ENCODE measurements at regions of chr15 and their contacts with region 1.

Region 1: GRCh38 chr15:65384895-65385858 is 7.4 kb upstream of the IGDCC3 start:
- DNase-seq: peak; percentile 96
- ATAC-seq: peak; percentile 86
- H3K4me3 Mint-ChIP-seq: peak overlapping the region; percentile 60
- H3K27ac Mint-ChIP-seq: no peak overlapping the region
- H3K4me1 Mint-ChIP-seq: peaks cover 24% of the 10 kb centered on the region
- H3K27me3 Mint-ChIP-seq: peaks cover 3% of the 10 kb centered on the region; the same call in 1 of the 2 replicates
- CTCF ChIP-seq: peak; percentile 75

Region 2: DNA sequence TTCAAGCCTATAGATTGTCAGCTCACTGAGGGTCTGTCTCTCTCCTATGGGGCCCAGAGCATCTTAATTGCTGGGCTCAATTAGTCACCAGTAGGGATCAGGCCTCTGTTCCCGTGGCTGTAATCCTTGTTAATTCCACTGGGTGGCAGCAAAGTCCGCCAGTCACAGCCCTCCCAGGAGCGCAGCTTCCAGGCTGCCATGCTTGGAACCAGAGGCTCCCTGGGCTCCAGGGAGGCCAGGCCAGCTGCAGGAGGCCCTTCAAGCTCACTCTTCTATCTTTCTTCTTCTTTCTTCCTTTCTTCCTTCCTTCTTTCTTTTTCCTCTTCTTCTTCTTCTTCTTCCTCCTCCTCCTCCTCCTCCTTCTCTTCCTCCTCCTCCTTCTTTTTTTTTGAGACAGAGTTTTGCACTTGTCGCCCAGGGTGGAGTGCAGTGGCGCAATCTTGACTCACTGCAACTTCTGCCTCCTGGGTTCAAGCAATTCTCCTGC is 66.3 kb before region 1 on chr15:
- CTCF ChIA-PET with region 1: interaction called, 175 read pairs
- POLR2A ChIA-PET with region 1: interaction called, 4 read pairs
- DNase-seq: peak; percentile 89
- ATAC-seq: peak; percentile 96
- H3K4me3 Mint-ChIP-seq: no peak overlapping the region
- H3K27ac Mint-ChIP-seq: no peak overlapping the region; the same call in 1 of the 2 replicates
- H3K4me1 Mint-ChIP-seq: no peaks in the 10 kb centered on the region
- H3K27me3 Mint-ChIP-seq: no peaks in the 10 kb centered on the region; the same call in 1 of the 2 replicates
- CTCF ChIP-seq: peak; percentile 93

Region 3: DNA sequence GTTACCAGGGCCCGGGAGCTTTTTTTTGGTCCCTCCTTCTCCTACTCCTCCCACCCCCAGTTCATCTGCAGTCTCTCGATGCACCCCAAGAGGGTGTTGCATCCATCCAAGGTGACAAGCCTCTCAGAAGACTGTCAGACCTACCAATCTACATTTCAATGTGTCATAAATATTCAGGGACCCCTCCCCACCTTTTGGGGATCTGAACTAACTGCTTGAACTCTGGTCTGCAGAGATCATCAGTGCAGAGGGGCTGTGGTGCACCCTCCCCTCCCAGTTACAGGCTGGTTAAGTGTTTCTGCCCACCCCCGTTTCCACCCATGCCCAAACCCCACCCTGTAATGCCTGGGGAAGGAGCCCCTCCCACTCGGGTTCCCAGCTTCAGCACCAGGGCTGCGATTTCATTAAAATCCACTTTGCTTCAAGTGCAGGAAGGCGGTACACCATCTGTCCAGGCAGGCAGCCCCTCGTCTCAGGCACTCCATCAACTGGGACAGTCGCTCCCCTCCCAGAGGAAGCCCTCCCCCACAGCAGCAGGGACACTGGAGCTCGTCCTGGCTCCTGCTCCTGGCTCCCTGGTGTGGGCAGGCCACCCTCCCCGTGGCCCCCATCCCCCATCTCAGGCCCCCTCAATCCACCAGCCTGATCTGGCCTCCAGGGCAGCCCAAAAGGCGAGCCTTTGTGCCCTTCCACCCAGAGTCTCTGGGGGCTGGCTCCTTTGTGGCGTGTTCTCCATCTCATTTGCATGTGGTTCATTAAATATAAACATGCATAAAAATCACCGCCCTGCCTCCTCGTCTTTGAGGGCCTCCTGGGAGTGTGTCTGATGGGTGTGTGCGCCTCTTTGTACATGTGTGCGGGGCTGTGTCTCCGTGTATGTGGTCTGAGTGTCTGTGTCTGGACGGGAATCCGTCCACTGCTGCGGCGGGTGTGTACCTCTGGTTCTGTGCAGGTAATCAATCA is 48.4 kb before region 1 on chr15:
- CTCF ChIA-PET with region 1: interaction called, 64 read pairs
- POLR2A ChIA-PET with region 1: no interaction called
- DNase-seq: no peak
- ATAC-seq: peak; percentile 40
- H3K4me3 Mint-ChIP-seq: no peak overlapping the region
- H3K27ac Mint-ChIP-seq: peak overlapping the region; percentile 45; the same call in 1 of the 2 replicates
- H3K4me1 Mint-ChIP-seq: peaks cover 76% of the 10 kb centered on the region
- H3K27me3 Mint-ChIP-seq: no peaks in the 10 kb centered on the region
- CTCF ChIP-seq: no peak

Region 4: DNA sequence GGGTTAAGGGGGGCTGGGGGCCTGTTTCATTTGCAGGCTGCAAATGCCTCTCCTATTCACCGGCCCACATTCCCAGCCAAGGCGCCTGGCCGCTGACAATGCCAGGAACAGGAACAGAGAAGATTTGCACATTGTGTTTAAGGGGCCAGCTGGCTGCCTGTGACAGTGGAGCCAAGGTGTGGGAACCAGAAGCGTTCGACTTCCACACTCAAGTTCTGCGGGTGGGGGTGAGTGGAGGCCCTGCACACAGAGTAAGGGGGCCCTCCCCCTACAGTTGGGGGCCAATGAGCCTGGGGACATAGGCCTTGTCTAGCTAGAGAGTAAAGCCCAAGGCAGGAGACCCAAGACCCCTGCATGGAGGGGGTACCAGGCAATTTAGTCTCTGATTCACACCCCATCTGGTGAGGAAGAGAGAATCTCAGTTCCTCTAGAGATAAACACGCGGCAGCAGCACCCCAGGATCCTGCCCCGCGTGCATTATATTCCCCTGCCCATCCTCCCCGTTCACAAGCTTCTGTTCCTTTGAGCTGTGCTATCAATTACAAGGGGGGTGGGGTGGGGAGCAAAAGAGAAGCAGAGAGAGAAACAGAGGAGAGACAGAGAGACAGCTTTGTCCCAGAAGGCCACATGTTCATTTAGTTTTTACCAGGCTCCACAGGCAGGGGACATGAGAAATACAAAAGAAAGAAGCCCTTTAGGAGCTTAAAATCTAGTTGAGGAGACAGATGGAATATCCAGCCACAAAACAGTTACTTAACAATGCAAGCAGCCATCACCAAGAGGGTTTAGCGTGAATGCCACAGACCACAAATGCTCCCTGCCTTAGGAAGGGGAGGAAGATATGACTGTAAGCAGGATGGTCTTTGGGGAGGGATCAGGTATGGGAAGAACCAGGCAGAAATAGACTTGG is 16.6 kb before region 1 on chr15:
- CTCF ChIA-PET with region 1: interaction called, 39 read pairs
- POLR2A ChIA-PET with region 1: interaction called, 3 read pairs
- DNase-seq: peak; percentile 69
- ATAC-seq: peak; percentile 58
- H3K4me3 Mint-ChIP-seq: peak overlapping the region; percentile 14; the same call in 1 of the 2 replicates
- H3K27ac Mint-ChIP-seq: peak overlapping the region; percentile 92
- H3K4me1 Mint-ChIP-seq: peaks cover 73% of the 10 kb centered on the region
- H3K27me3 Mint-ChIP-seq: no peaks in the 10 kb centered on the region
- CTCF ChIP-seq: no peak

Region 5: DNA sequence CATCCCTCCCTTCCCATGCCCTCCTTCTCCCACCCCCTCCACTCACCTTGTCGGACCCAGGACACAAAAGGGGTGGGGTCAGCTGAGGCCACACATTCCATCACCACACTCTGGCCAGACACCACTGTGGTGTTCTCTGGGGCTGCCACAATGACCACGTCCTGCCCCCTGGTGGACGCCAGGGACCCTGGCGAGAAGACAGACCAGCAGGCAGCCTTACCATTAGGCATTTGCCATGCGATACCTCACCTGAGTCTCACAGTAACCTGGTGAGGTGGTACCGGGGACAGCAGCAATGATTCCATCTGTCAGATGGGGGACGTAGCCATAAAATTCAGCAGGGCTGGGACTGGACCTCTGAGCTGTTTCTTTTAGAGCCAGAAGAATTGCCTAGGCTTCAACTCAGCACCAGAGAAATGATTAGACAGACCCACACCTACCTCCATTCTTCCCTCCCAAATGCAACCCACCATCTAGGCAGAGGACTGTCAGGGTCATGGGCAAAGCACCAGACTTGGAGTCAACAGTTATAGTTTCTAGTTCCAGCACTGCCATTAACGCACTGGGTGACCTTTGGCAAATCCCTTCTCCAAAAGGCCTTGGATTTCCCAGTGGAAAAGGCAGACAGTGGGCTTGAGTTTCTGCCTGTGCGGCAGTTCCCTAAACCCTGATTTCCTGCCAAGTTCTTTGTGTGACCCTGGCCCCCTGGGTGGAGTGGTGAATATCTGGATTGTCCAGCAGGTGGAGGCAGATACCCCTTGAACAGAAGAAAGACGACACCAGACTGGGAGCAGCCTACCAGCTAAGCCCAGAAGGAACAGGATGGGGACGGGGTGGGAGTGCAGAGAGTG is 15.8 kb after region 1 on chr15:
- CTCF ChIA-PET with region 1: interaction called, 23 read pairs
- POLR2A ChIA-PET with region 1: no interaction called
- DNase-seq: peak; percentile 92
- ATAC-seq: peak; percentile 83
- H3K4me3 Mint-ChIP-seq: no peak overlapping the region
- H3K27ac Mint-ChIP-seq: peak overlapping the region; percentile 95
- H3K4me1 Mint-ChIP-seq: peaks cover 42% of the 10 kb centered on the region
- H3K27me3 Mint-ChIP-seq: peaks cover 24% of the 10 kb centered on the region
- CTCF ChIP-seq: peak; percentile 74

Region 6: GRCh38 chr15:65494071-65494470 is 108.9 kb after region 1 on chr15:
- CTCF ChIA-PET with region 1: no interaction called
- POLR2A ChIA-PET with region 1: no interaction called
- DNase-seq: no peak
- ATAC-seq: no peak
- H3K4me3 Mint-ChIP-seq: no peak overlapping the region
- H3K27ac Mint-ChIP-seq: no peak overlapping the region
- H3K4me1 Mint-ChIP-seq: no peaks in the 10 kb centered on the region
- H3K27me3 Mint-ChIP-seq: no peaks in the 10 kb centered on the region
- CTCF ChIP-seq: no peak

Region 7: DNA sequence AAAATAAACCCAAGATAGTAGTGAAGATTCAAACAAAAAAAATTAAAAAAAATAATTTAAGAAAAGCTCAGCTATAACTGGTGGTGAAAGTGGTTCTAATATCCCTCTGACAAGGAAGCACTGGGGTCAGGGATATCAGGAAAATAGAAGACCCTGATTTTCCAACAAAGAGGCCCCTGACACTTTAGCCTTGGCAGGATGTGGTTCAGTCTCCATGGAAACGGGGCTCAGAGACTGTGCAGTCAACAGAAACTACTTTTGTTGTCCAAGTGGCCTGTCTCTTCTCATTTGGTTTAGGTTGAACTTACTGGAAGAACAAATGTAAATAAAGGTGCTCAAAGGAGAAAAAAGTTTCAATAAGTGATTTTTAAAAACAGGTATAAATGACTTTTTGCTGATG is 198.5 kb after region 1 on chr15:
- CTCF ChIA-PET with region 1: no interaction called
- POLR2A ChIA-PET with region 1: no interaction called
- DNase-seq: no peak
- ATAC-seq: no peak
- H3K4me3 Mint-ChIP-seq: no peak overlapping the region
- H3K27ac Mint-ChIP-seq: no peak overlapping the region
- H3K4me1 Mint-ChIP-seq: peaks cover 10% of the 10 kb centered on the region
- H3K27me3 Mint-ChIP-seq: no peaks in the 10 kb centered on the region
- CTCF ChIP-seq: no peak